ENCODE measurements at regions of chr22 and their contacts with region 1.

Region 1: DNA sequence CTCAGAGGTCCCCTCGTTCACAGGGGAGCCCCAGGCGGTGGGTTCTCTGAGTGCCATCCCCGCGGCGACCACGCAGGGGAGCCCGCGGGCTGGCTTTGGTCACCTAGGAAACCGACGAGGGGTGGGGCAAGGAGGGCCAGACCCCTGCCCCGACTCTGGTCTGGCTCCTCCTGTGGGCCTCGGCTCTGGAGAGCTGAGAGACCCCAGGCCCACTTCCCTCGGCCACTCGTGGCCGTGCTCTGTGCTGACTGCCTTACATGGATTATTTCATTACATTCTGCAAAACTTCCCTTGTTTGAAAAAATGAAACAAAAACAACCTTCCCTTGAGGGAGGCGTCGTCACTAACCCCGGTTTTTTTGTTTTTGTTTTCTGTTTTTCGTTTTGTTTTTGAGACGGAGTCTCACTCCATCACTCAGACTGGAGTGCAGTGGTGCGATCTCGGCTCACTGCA is 15.1 kb upstream of the CYTH4 start:
- DNase-seq: peak; percentile 58 to 84 (median 73)
- ATAC-seq: peak; percentile 92
- H3K4me3 ChIP-seq: peak overlapping the region; percentile 76
- H3K4me3 Mint-ChIP-seq: peak overlapping the region; percentile 84 to 93 (median 88)
- H3K27ac ChIP-seq: peak overlapping the region; percentile 87
- H3K27ac Mint-ChIP-seq: peak overlapping the region; percentile 91 to 99 (median 95)
- H3K4me1 ChIP-seq: peaks cover 0 to 13% of the 10 kb centered on the region in 2 donors
- H3K4me1 Mint-ChIP-seq: peaks cover 30 to 48% (median 38%) of the 10 kb centered on the region in 7 donors
- H3K27me3 ChIP-seq: no peaks in the 10 kb centered on the region
- H3K27me3 Mint-ChIP-seq: peaks cover 0 to 14% (median 0%) of the 10 kb centered on the region in 5 donors

Region 2: GRCh38 chr22:37282385-37282677 is 15.2 kb after region 1 on chr22 and contains the start of gene CYTH4:
- CTCF ChIA-PET with region 1: interaction called, 7 read pairs
- POLR2A ChIA-PET with region 1: interaction called, 13 read pairs
- intact Hi-C with region 1: loop called (anchors 1 kb)
- DNase-seq: peak; percentile 48 to 76 (median 67)
- ATAC-seq: peak; percentile 78
- H3K4me3 ChIP-seq: peak within 1 kb of the TSS; percentile 89
- H3K4me3 Mint-ChIP-seq: peak within 1 kb of the TSS; percentile 90 to 98 (median 96)
- H3K27ac ChIP-seq: peak within 1 kb of the TSS; percentile 85
- H3K27ac Mint-ChIP-seq: peak within 1 kb of the TSS; percentile 90 to 99 (median 98)
- H3K4me1 ChIP-seq: peaks cover 16 to 27% of the 10 kb centered on the region in 2 donors
- H3K4me1 Mint-ChIP-seq: peaks cover 41 to 83% (median 62%) of the 10 kb centered on the region in 7 donors
- H3K27me3 ChIP-seq: no peaks in the 10 kb centered on the region
- H3K27me3 Mint-ChIP-seq: no peaks in the 10 kb centered on the region
- total RNA-seq, gene CYTH4: 123 to 227 (median 214) TPM

Region 3: GRCh38 chr22:37316875-37317371 is 49.8 kb after region 1 on chr22:
- CTCF ChIA-PET with region 1: interaction called, 9 read pairs
- POLR2A ChIA-PET with region 1: interaction called, 70 read pairs
- intact Hi-C with region 1: loop called (anchors 1 to 2 kb)
- DNase-seq: peak; percentile 37 to 75 (median 66)
- ATAC-seq: peak; percentile 84
- H3K4me3 ChIP-seq: no peak overlapping the region
- H3K4me3 Mint-ChIP-seq: no peak overlapping the region
- H3K27ac ChIP-seq: no peak overlapping the region
- H3K27ac Mint-ChIP-seq: peak overlapping the region in 6 of 9 donors; percentile 17 to 77 (median 51)
- H3K4me1 ChIP-seq: peaks cover 21 to 31% of the 10 kb centered on the region in 2 donors
- H3K4me1 Mint-ChIP-seq: peaks cover 22 to 47% (median 42%) of the 10 kb centered on the region in 7 donors
- H3K27me3 ChIP-seq: no peaks in the 10 kb centered on the region
- H3K27me3 Mint-ChIP-seq: peaks cover 0 to 14% (median 0%) of the 10 kb centered on the region in 5 donors

Region 4: DNA sequence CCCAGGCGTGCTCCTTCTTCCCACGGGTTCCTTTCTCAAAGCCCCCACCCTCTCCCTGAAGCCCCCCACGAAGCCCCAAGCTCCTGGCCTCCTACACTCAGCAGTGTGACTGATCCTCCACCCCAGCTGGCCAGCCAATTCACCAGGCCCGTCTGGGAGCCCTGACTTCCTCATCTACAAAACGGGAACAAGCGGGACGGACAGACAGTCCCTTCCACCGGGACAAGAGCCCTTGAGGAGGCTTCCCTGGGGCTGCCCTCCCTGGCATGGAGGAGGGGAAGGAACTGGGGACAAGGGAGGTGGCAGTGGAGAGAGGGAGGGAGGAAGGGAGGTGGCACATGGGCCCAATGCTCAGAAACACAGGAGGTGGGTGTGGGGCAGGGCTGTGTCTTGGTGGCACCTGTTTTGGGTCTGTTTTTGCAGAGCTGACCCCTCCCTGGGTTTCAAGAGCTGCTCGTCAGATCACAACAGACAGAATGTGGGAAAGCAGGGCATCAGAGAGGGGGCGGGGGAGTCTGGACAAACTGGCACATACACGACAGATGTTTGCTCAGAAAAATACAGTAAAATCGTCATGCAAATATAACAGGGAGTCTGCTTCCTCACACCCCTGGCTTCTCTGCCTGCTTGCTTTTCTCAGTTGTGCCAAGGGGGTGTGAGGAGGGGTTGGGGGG is 103.3 kb after region 1 on chr22:
- CTCF ChIA-PET with region 1: no interaction called
- POLR2A ChIA-PET with region 1: no interaction called
- intact Hi-C with region 1: no loop called
- DNase-seq: peak in 1 of 9 donors; percentile 8
- ATAC-seq: peak; percentile 62
- H3K4me3 ChIP-seq: no peak overlapping the region
- H3K4me3 Mint-ChIP-seq: no peak overlapping the region
- H3K27ac ChIP-seq: no peak overlapping the region
- H3K27ac Mint-ChIP-seq: peak overlapping the region in 1 of 9 donors; percentile 51
- H3K4me1 ChIP-seq: no peaks in the 10 kb centered on the region
- H3K4me1 Mint-ChIP-seq: peaks cover 0 to 7% (median 0%) of the 10 kb centered on the region in 7 donors
- H3K27me3 ChIP-seq: no peaks in the 10 kb centered on the region
- H3K27me3 Mint-ChIP-seq: peaks cover 0 to 11% (median 5%) of the 10 kb centered on the region in 5 donors

Region 5: DNA sequence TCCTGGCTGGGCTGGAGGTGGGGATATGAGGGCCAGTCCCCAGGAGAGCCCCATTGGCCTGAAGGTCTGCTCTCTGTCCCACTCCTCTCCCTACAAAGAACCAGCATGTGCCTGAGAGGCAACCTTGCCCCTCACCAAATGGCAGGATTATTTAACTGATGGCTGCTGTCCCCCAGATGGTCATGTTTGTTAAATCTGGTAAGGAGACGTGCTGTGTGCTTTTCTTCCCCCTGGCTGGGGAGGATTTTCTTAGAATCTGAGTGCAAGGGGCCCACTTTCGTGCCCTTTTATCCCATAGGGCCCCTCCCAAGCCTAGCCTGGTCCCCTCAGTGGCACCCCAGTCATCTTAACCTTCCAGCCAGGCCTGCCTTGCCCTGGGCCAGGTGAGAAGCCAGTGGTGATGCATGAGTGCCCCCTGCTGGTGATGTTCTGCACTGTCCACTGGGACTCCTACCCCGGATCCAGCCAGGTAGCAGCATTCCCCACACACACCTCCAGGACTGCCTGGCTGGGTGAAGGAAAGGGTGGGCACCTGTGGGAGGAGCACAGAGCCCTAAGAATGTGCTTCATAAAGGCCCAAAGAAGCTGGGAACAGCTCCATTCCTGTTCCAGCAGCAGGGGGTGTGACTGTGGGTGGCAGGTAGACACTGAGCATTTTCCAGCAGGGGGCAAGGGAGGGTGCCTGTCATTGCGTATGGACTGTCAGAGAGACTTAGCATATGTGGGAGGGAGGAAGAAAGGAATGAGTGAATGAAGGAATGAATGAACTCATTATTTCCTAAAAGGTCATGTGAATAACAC is 190.1 kb after region 1 on chr22:
- CTCF ChIA-PET with region 1: interaction called, 5 read pairs
- POLR2A ChIA-PET with region 1: interaction called, 5 read pairs
- intact Hi-C with region 1: loop called (anchors 1 kb)
- DNase-seq: peak; percentile 66 to 88 (median 77)
- ATAC-seq: peak; percentile 96
- H3K4me3 ChIP-seq: no peak overlapping the region
- H3K4me3 Mint-ChIP-seq: no peak overlapping the region
- H3K27ac ChIP-seq: no peak overlapping the region
- H3K27ac Mint-ChIP-seq: peak overlapping the region in 1 of 9 donors; percentile 51
- H3K4me1 ChIP-seq: no peaks in the 10 kb centered on the region
- H3K4me1 Mint-ChIP-seq: peaks cover 0 to 9% (median 5%) of the 10 kb centered on the region in 7 donors
- H3K27me3 ChIP-seq: no peaks in the 10 kb centered on the region
- H3K27me3 Mint-ChIP-seq: no peaks in the 10 kb centered on the region

Region 6: DNA sequence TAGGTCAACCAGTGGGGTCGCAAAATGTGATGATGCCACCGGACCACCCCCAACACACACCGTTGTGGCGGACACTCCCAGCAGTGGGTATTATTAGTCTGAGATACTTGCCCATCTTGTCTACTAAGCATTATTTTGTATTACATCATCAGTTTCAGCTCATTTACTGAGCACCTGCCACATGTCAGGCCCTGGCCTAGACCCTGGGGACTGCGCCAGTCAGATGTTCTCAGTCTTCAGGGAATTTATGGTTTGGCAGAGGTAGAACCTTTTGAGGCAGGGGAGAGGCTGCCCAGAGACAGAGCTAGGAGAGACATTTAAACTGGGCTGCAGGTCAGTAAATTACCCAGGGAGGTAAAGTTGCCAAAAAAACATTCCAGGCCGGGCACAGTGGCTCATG is 497.5 kb after region 1 on chr22:
- CTCF ChIA-PET with region 1: no interaction called
- POLR2A ChIA-PET with region 1: no interaction called
- intact Hi-C with region 1: no loop called
- DNase-seq: no peak
- ATAC-seq: no peak
- H3K4me3 ChIP-seq: no peak overlapping the region
- H3K4me3 Mint-ChIP-seq: no peak overlapping the region
- H3K27ac ChIP-seq: no peak overlapping the region
- H3K27ac Mint-ChIP-seq: no peak overlapping the region
- H3K4me1 ChIP-seq: no peaks in the 10 kb centered on the region
- H3K4me1 Mint-ChIP-seq: peaks cover 0 to 9% (median 0%) of the 10 kb centered on the region in 7 donors
- H3K27me3 ChIP-seq: no peaks in the 10 kb centered on the region
- H3K27me3 Mint-ChIP-seq: no peaks in the 10 kb centered on the region

Measured in naive thymus-derived CD4-positive, alpha-beta T cell (primary cell).